ENCODE measurements at regions of chr3 and their contacts with region 1.

Region 1: DNA sequence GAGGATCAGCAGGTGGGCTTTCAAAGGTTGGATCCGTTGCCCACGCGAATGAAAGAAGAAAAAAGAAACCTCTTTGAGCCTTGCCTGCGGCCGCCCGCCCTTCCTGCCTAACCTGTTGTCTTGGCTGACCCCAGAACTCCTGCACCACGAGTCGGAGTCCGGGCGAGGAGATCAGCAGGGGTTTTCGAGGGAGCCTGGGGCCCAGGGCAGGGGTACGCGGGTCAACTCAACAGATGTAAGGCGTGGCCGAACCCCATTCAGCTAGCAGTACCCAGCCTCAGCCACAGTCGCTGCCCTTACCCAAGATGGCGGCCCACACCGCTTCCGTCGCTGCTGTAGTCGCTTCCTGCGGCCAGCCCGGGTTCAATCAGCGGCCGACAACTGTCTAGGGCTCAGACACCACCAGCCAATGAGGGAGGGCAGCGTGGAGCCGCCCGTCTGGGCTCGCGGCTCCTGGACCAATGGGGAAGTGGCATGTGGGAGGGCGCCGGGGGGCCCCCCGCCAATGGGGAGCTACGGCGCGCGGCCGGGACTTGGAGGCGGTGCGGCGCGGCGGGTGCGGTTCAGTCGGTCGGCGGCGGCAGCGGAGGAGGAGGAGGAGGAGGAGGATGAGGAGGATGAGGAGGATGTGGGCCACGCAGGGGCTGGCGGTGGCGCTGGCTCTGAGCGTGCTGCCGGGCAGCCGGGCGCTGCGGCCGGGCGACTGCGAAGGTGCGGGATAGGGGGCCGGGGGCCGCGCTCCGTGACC is at the start of gene MANF:
- DNase-seq: peak; percentile 94 to 99 (median 97)
- ATAC-seq: peak; percentile 93
- H3K4me3 ChIP-seq: peak within 1 kb of the TSS; percentile 86 to 94
- H3K4me3 Mint-ChIP-seq: peak within 1 kb of the TSS; percentile 99
- H3K27ac ChIP-seq: peak within 1 kb of the TSS; percentile 90 to 93
- H3K27ac Mint-ChIP-seq: peak within 1 kb of the TSS; percentile 100
- H3K4me1 ChIP-seq: peaks cover 35% of the 10 kb centered on the region
- H3K4me1 Mint-ChIP-seq: peaks cover 44% of the 10 kb centered on the region
- H3K27me3 ChIP-seq: no peaks in the 10 kb centered on the region
- H3K27me3 Mint-ChIP-seq: no peaks in the 10 kb centered on the region
- CTCF ChIP-seq: no peak
- total RNA-seq, gene MANF: 32.2 to 35.0 TPM

Region 2: GRCh38 chr3:51024765-51025632 is 359.9 kb before region 1 on chr3:
- CTCF ChIA-PET with region 1: interaction called, 3 read pairs
- POLR2A ChIA-PET with region 1: no interaction called
- intact Hi-C with region 1: loop called (anchors 1 kb)
- DNase-seq: peak; percentile 59 to 94 (median 78)
- ATAC-seq: peak; percentile 92
- H3K4me3 ChIP-seq: peak overlapping the region; percentile 36 to 38
- H3K4me3 Mint-ChIP-seq: peak overlapping the region; percentile 72
- H3K27ac ChIP-seq: peak overlapping the region; percentile 69 to 83
- H3K27ac Mint-ChIP-seq: peak overlapping the region; percentile 93
- H3K4me1 ChIP-seq: peaks cover 44% of the 10 kb centered on the region
- H3K4me1 Mint-ChIP-seq: peaks cover 61% of the 10 kb centered on the region
- H3K27me3 ChIP-seq: no peaks in the 10 kb centered on the region
- H3K27me3 Mint-ChIP-seq: no peaks in the 10 kb centered on the region
- CTCF ChIP-seq: no peak